Natural killer cell (primary cell): ENCODE measurements at regions of chr12 and their contacts with region 1.

Region 1: GRCh38 chr12:123365025-123365917 is 624 bp upstream of the SBNO1 start:
- DNase-seq: peak; percentile 95 to 100
- ATAC-seq: peak; percentile 72 to 89 (median 80)
- H3K4me3 ChIP-seq: peak overlapping the region; percentile 67
- H3K4me3 Mint-ChIP-seq: peak overlapping the region; percentile 95
- H3K27ac ChIP-seq: peak overlapping the region; percentile 95
- H3K27ac Mint-ChIP-seq: peak overlapping the region; percentile 95 to 96
- H3K4me1 ChIP-seq: peaks cover 28% of the 10 kb centered on the region
- H3K4me1 Mint-ChIP-seq: peaks cover 23 to 25% of the 10 kb centered on the region in 2 donors
- H3K27me3 ChIP-seq: no peaks in the 10 kb centered on the region
- H3K27me3 Mint-ChIP-seq: no peaks in the 10 kb centered on the region
- CTCF ChIP-seq: peak; percentile 83

Region 2: GRCh38 chr12:123270214-123271000 is 94.9 kb before region 1 on chr12:
- intact Hi-C with region 1: loop called (anchors 1 kb)
- DNase-seq: peak in 1 of 2 donors; percentile 40
- ATAC-seq: no peak
- H3K4me3 ChIP-seq: peak overlapping the region; percentile 36
- H3K4me3 Mint-ChIP-seq: peak overlapping the region; percentile 78
- H3K27ac ChIP-seq: no peak overlapping the region
- H3K27ac Mint-ChIP-seq: peak overlapping the region in 1 of 2 donors; percentile 71
- H3K4me1 ChIP-seq: peaks cover 35% of the 10 kb centered on the region
- H3K4me1 Mint-ChIP-seq: peaks cover 5 to 36% of the 10 kb centered on the region in 2 donors
- H3K27me3 ChIP-seq: no peaks in the 10 kb centered on the region
- H3K27me3 Mint-ChIP-seq: no peaks in the 10 kb centered on the region
- CTCF ChIP-seq: no peak

Region 3: DNA sequence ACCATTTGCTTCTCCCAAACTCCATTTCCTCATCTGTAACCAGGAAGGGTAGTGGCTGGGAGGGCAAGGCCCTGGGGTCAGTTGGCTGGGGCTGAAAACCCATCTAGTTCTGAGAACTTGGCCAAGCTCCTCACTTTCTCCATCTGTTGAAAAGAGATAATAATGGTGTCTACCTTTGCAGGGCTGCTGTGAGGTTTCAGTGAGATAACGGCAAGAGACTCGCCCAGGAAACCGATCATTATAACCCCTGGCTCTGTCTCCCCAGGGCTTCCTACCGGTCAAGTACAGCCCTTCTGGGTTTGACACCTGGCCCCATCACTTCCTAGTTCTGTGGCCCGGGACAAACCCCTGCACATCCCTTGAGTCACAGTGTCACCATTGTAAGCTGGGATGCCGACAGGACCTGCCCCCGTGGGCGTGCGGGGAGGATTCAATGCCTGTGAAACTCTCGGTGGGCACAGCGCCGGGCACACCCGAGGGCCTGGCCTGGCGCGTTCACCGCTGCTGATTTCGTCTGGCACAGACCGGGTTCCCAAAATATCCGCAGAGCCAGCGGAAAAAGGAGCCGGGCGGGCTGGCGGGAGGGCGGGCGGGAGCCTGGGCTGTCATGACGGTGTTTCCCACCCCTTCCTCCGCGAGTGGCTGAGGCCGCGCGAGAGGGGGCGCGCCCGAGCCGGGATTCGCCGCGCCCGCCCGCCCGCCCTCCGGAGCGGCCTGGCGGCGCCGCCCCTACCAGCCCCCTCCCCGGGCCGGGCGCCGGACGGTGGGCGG is 23.1 kb after region 1 on chr12:
- intact Hi-C with region 1: loop called (anchors 1 kb)
- DNase-seq: peak; percentile 68 to 86
- ATAC-seq: peak; percentile 64 to 79 (median 71)
- H3K4me3 ChIP-seq: peak overlapping the region; percentile 77
- H3K4me3 Mint-ChIP-seq: peak overlapping the region; percentile 85
- H3K27ac ChIP-seq: peak overlapping the region; percentile 88
- H3K27ac Mint-ChIP-seq: peak overlapping the region; percentile 80 to 82
- H3K4me1 ChIP-seq: peaks cover 50% of the 10 kb centered on the region
- H3K4me1 Mint-ChIP-seq: peaks cover 36 to 46% of the 10 kb centered on the region in 2 donors
- H3K27me3 ChIP-seq: no peaks in the 10 kb centered on the region
- H3K27me3 Mint-ChIP-seq: no peaks in the 10 kb centered on the region
- CTCF ChIP-seq: no peak

Region 4: GRCh38 chr12:123441523-123442164 is 76.4 kb after region 1 on chr12:
- intact Hi-C with region 1: no loop called
- DNase-seq: no peak
- ATAC-seq: no peak
- H3K4me3 ChIP-seq: no peak overlapping the region
- H3K4me3 Mint-ChIP-seq: no peak overlapping the region
- H3K27ac ChIP-seq: no peak overlapping the region
- H3K27ac Mint-ChIP-seq: no peak overlapping the region
- H3K4me1 ChIP-seq: peaks cover 16% of the 10 kb centered on the region
- H3K4me1 Mint-ChIP-seq: peaks cover 6 to 14% of the 10 kb centered on the region in 2 donors
- H3K27me3 ChIP-seq: no peaks in the 10 kb centered on the region
- H3K27me3 Mint-ChIP-seq: no peaks in the 10 kb centered on the region
- CTCF ChIP-seq: no peak

Region 5: GRCh38 chr12:123457980-123458783 is 92.9 kb after region 1 on chr12 and contains the start of gene SNRNP35:
- intact Hi-C with region 1: loop called (anchors 10 kb)
- DNase-seq: peak; percentile 84 to 94
- ATAC-seq: peak; percentile 75 to 83 (median 82)
- H3K4me3 ChIP-seq: peak within 1 kb of the TSS; percentile 98
- H3K4me3 Mint-ChIP-seq: peak within 1 kb of the TSS; percentile 100
- H3K27ac ChIP-seq: peak within 1 kb of the TSS; percentile 98
- H3K27ac Mint-ChIP-seq: peak within 1 kb of the TSS; percentile 100
- H3K4me1 ChIP-seq: peaks cover 13% of the 10 kb centered on the region
- H3K4me1 Mint-ChIP-seq: peaks cover 17 to 30% of the 10 kb centered on the region in 2 donors
- H3K27me3 ChIP-seq: no peaks in the 10 kb centered on the region
- H3K27me3 Mint-ChIP-seq: no peaks in the 10 kb centered on the region
- CTCF ChIP-seq: no peak
- total RNA-seq, gene SNRNP35: 25.6 to 34.8 (median 28.7) TPM

Region 6: DNA sequence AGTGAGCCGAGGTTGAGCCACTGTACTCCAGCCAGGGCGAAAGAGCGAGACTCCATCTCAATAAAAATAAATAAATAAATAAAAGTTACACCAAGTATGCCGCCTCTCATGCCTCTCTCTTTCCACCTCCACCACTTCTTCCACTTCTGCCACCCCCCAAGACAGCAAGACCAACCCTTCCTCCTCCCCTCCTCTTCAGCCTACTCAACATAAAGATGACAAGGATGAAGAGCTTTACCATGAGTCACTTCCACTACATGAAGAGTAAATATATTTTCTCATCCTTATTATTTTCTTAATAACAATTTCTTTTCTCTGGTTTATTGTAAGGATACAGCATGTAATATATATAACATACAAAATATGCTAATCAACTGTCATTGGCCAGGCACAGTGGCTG is 215.5 kb after region 1 on chr12:
- intact Hi-C with region 1: loop called (anchors 5 kb)
- DNase-seq: no peak
- ATAC-seq: no peak
- H3K4me3 ChIP-seq: no peak overlapping the region
- H3K4me3 Mint-ChIP-seq: no peak overlapping the region
- H3K27ac ChIP-seq: no peak overlapping the region
- H3K27ac Mint-ChIP-seq: no peak overlapping the region
- H3K4me1 ChIP-seq: peaks cover 23% of the 10 kb centered on the region
- H3K4me1 Mint-ChIP-seq: peaks cover 18 to 20% of the 10 kb centered on the region in 2 donors
- H3K27me3 ChIP-seq: no peaks in the 10 kb centered on the region
- H3K27me3 Mint-ChIP-seq: no peaks in the 10 kb centered on the region
- CTCF ChIP-seq: no peak

Region 7: DNA sequence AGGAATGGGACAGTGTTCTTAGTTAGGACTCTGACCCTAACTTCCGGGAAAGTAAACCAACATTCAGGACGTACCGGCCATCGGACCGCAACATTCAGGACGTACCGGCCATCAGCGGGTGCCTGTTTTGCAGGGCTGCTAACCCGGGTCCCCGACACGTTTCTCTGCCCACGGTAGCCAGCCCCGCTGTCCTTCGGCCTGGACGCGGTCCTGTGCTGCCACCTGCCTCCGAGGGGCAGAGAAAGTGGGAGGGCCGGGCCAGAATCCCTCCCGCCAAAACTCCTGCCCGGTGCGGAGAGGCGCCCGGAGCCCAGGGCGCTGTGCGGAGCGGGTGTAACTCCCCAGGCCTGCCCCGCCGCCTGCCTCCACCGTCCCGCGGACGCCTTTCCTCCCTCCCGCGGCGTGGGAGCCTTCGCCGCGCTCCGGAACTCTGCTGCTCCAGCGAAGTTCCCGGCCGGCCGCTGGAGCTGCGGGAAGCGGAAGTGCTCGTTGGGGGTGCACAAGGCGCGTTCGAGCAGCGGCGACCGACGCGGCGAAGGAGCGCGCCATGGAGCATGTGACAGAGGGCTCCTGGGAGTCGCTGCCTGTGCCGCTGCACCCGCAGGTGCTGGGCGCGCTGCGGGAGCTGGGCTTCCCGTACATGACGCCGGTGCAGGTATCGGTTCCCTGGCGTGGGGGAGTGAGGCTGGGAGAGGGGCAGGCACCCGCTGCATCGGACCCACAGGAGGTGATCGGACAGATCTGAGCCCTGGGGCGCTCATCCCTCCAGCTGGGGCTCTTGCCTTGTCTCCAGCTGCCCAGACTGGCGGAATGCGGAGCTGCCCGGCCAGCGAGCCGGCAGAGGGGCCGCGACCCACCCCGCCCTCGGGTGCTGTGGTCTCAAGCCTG is 236.6 kb after region 1 on chr12 and contains the start of gene DDX55:
- intact Hi-C with region 1: loop called (anchors 5 kb)
- DNase-seq: peak; percentile 81 to 95
- ATAC-seq: peak; percentile 91 to 96 (median 94)
- H3K4me3 ChIP-seq: peak within 1 kb of the TSS; percentile 93
- H3K4me3 Mint-ChIP-seq: peak within 1 kb of the TSS; percentile 99
- H3K27ac ChIP-seq: peak within 1 kb of the TSS; percentile 83
- H3K27ac Mint-ChIP-seq: peak within 1 kb of the TSS; percentile 92 to 97
- H3K4me1 ChIP-seq: peaks cover 26% of the 10 kb centered on the region
- H3K4me1 Mint-ChIP-seq: peaks cover 21 to 23% of the 10 kb centered on the region in 2 donors
- H3K27me3 ChIP-seq: no peaks in the 10 kb centered on the region
- H3K27me3 Mint-ChIP-seq: no peaks in the 10 kb centered on the region
- CTCF ChIP-seq: peak; percentile 43
- total RNA-seq, gene DDX55: 25.9 to 42.7 (median 41.5) TPM